GM12878 (cell line): ENCODE measurements at regions of chr3 and their contacts with region 1.

Region 1: GRCh38 chr3:146189519-146190173 is 28.7 kb upstream of the PLOD2 start:
- DNase-seq: no peak
- ATAC-seq: peak; percentile 95
- H3K4me3 ChIP-seq: no peak overlapping the region
- H3K27ac ChIP-seq: no peak overlapping the region
- H3K4me1 ChIP-seq: no peaks in the 10 kb centered on the region
- H3K27me3 ChIP-seq: no peaks in the 10 kb centered on the region
- CTCF ChIP-seq: peak; percentile 67 to 73 (median 72)
- EP300 ChIP-seq: no peak
- POLR2A ChIP-seq: no peak
- RAD21 ChIP-seq: peak; percentile 69

Region 2: GRCh38 chr3:146177519-146177918 is 12.1 kb before region 1 on chr3:
- CTCF ChIA-PET with region 1: interaction called, 12 read pairs
- POLR2A ChIA-PET with region 1: no interaction called
- RAD21 ChIA-PET with region 1: no interaction called
- SMC1A ChIA-PET with region 1: interaction called, 6 read pairs
- in situ Hi-C with region 1: no loop called
- intact Hi-C with region 1: no loop called
- DNase-seq: no peak
- ATAC-seq: no peak
- H3K4me3 ChIP-seq: no peak overlapping the region
- H3K27ac ChIP-seq: no peak overlapping the region
- H3K4me1 ChIP-seq: no peaks in the 10 kb centered on the region
- H3K27me3 ChIP-seq: no peaks in the 10 kb centered on the region
- CTCF ChIP-seq: no peak
- EP300 ChIP-seq: no peak
- POLR2A ChIP-seq: no peak
- RAD21 ChIP-seq: no peak

Region 3: GRCh38 chr3:146326670-146327543 is 137.3 kb after region 1 on chr3:
- CTCF ChIA-PET with region 1: interaction called, 29 read pairs
- POLR2A ChIA-PET with region 1: no interaction called
- RAD21 ChIA-PET with region 1: interaction called, 21 read pairs
- SMC1A ChIA-PET with region 1: interaction called, 10 read pairs
- in situ Hi-C with region 1: no loop called
- intact Hi-C with region 1: no loop called
- DNase-seq: no peak
- ATAC-seq: 0 out of 3 replicates have a peak, but pooled peaks have one; percentile 37
- H3K4me3 ChIP-seq: no peak overlapping the region
- H3K27ac ChIP-seq: no peak overlapping the region
- H3K4me1 ChIP-seq: no peaks in the 10 kb centered on the region
- H3K27me3 ChIP-seq: no peaks in the 10 kb centered on the region
- CTCF ChIP-seq: peak in 1 of 3 experiments; percentile 22; a peak in 2 of 6 replicates
- EP300 ChIP-seq: no peak
- POLR2A ChIP-seq: no peak
- RAD21 ChIP-seq: peak; percentile 24; the same call in 1 of the 2 replicates

Region 4: DNA sequence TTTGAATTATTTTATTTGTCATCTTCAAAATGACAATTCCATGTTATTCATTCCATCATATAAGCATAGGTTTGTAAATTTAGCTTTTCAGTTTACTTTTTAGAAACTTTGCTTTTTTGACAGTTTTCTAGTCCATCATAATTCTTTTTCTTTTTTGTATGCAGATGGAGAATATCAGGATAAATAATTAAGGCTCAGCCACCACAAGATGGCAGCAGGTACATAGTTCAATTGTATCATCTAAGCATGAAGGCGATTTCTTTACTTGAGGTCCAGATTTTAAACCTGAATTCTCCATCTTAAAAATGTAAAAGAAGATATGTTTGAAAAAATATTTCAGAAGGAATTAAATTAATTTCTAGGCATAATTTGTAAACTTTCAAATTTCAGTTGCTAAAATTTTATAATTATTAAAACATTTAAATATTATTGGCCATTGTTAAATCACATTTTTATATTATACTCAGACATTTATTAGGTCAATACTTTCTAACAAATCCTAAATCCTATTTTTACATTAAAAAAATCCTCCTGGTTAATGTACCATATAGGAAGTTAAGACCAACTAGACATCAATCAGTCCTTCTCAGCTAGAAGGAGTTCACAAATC is 400.4 kb after region 1 on chr3:
- CTCF ChIA-PET with region 1: interaction called, 30 read pairs
- POLR2A ChIA-PET with region 1: no interaction called
- RAD21 ChIA-PET with region 1: interaction called, 6 read pairs
- SMC1A ChIA-PET with region 1: interaction called, 5 read pairs
- in situ Hi-C with region 1: no loop called
- intact Hi-C with region 1: no loop called
- DNase-seq: no peak
- ATAC-seq: peak; percentile 65
- H3K4me3 ChIP-seq: no peak overlapping the region
- H3K27ac ChIP-seq: no peak overlapping the region
- H3K4me1 ChIP-seq: no peaks in the 10 kb centered on the region
- H3K27me3 ChIP-seq: no peaks in the 10 kb centered on the region
- CTCF ChIP-seq: peak; percentile 30 to 51 (median 38); a peak in 5 of 6 replicates
- EP300 ChIP-seq: no peak
- POLR2A ChIP-seq: no peak
- RAD21 ChIP-seq: peak; percentile 48; the same call in 1 of the 2 replicates